GM10248 (cell line): ENCODE measurements at regions of chr20 and their contacts with region 1.

Region 1: DNA sequence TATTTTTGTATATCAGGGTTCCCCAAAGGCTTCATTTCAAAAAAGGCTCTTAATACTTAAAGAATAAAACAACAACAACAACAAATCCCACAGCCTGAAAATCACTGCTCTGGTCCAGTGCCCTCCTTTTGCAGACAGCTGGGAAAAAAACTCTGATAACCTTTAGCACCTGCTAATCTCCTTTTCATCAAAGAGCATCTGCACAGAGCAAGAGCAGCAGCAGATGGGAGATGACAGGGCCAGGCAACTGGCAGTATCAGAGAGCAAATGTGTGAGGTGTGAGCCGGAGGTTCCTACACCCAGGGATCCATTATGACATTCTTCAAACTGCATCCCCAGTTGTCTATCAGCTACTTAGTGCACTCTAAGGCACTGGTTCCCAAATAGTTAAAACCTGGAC is 25.7 kb downstream of the TTI1 start:
- DNase-seq: no peak
- CTCF ChIP-seq: no peak

Region 2: GRCh38 chr20:37680420-37680819 is 327.1 kb before region 1 on chr20:
- CTCF ChIA-PET with region 1: no interaction called
- POLR2A ChIA-PET with region 1: no interaction called
- DNase-seq: no peak
- CTCF ChIP-seq: no peak

Region 3: DNA sequence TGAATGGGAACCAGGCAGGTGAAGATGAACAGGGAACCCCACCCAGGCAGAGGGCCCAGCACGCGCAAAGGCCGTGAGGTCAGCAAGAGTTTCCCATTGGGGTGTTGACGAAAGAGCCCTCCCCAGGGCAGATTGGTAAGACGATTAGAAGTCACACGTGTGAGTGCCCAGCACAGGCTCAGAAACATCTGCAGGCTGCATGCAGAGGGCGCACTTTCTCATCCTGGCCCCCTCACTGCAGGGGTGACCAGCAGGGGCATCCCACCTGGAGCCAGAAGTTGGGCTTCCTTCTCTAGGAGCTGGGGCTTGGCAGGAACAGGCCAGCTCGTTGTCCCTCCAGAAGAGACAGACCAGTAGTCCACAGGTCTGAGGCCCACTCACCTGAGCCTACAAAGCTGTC is 66.2 kb before region 1 on chr20:
- CTCF ChIA-PET with region 1: no interaction called
- POLR2A ChIA-PET with region 1: no interaction called
- DNase-seq: no peak
- CTCF ChIP-seq: no peak

Region 4: DNA sequence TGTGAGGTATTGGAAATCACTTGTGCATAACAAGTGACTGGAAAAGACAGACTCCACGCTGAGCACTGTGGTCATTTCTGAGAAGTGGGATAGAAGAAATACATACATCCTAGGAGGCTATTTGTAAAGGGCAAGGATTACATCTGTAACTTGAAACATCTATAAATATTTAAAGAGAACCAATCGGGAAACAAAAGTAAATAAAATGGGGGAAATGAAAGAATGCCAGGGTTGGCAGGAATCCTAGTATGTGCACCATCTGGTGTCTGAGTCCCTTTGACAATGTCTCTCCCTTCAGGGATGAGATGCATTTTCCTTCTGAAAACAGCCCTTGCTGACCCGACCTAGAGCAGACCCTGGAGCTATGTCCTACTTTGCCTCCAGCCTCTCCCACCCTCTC is 51.4 kb before region 1 on chr20:
- CTCF ChIA-PET with region 1: no interaction called
- POLR2A ChIA-PET with region 1: no interaction called
- DNase-seq: no peak
- CTCF ChIP-seq: no peak

Region 5: GRCh38 chr20:37990571-37991151 is 16.9 kb before region 1 on chr20:
- CTCF ChIA-PET with region 1: interaction called, 34 read pairs
- POLR2A ChIA-PET with region 1: no interaction called
- DNase-seq: peak; percentile 86
- CTCF ChIP-seq: no peak